Activated CD4-positive, alpha-beta T cell treated with anti-CD3 and anti-CD28 coated beads, Interleukin-2, amount 10 ng/mL, durations not matched to agents 24 days and 14 days (primary cell): ENCODE measurements at regions of chr15 and their contacts with region 1.

Region 1: GRCh38 chr15:81274931-81275707 is 48.8 kb downstream of the STARD5 start:
- DNase-seq: peak; percentile 94
- H3K4me3 Mint-ChIP-seq: peak overlapping the region; percentile 15
- H3K27ac Mint-ChIP-seq: peak overlapping the region; percentile 48
- H3K4me1 Mint-ChIP-seq: peaks cover 29% of the 10 kb centered on the region
- H3K27me3 Mint-ChIP-seq: no peaks in the 10 kb centered on the region

Region 2: DNA sequence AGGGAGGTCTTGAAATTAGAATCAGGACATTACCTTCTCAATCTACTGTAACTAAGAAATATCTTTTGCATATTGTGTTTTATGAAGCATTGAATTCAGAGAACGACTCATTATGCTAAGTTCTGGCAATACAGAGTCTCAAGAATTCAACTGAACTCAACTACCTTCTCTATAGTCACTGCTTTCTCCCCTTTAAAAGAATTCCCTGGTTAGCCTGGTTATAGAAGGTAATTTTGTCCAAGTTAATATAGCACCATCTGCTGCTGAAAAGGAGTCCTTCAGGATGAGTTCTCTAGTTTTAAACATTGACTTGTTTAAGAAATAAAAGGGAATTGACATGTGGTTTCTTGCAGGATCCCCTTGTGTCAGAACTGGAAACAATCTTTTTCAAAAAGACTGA is 18.2 kb before region 1 on chr15:
- intact Hi-C with region 1: no loop called
- DNase-seq: no peak
- H3K4me3 Mint-ChIP-seq: no peak overlapping the region
- H3K27ac Mint-ChIP-seq: no peak overlapping the region
- H3K4me1 Mint-ChIP-seq: peaks cover 2% of the 10 kb centered on the region
- H3K27me3 Mint-ChIP-seq: peaks cover 21% of the 10 kb centered on the region

Region 3: DNA sequence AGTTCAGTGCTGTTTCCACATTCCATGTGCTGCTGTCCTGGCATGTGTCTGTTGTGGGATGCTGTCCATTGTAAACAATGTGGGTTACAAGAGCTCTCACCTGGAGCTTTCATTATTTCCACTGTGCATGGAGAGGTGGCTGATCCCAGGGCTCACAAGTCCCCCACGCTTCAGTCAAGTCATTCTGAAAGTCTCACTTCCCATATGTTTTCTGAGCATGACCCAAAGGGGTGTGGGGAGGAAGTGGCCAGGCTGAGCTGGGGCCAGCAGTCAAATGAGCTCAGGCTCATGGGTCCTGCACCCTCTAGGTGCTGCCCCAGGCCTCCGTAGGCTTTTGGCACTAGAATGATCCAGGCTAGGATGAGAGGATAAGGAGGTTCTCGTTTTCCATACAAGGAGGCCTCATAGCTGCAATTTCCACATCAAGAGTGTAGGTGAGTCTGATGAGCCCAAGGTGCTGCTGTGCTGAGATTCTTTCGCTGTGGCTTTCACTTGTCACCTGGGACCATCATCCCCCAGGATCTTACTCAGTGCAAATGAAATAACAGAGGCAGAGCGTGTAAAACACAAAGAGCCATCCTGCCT is 26.8 kb after region 1 on chr15:
- intact Hi-C with region 1: loop called (anchors 1 kb)
- DNase-seq: peak; percentile 84
- H3K4me3 Mint-ChIP-seq: peak overlapping the region; percentile 94
- H3K27ac Mint-ChIP-seq: peak overlapping the region; percentile 89
- H3K4me1 Mint-ChIP-seq: peaks cover 77% of the 10 kb centered on the region
- H3K27me3 Mint-ChIP-seq: no peaks in the 10 kb centered on the region

Region 4: GRCh38 chr15:81323944-81324881 is 49.1 kb after region 1 on chr15 and contains the start of gene STARD5:
- intact Hi-C with region 1: loop called (anchors 1 kb)
- DNase-seq: peak; percentile 100
- H3K4me3 Mint-ChIP-seq: peak within 1 kb of the TSS; percentile 91
- H3K27ac Mint-ChIP-seq: peak within 1 kb of the TSS; percentile 73
- H3K4me1 Mint-ChIP-seq: peaks cover 23% of the 10 kb centered on the region
- H3K27me3 Mint-ChIP-seq: no peaks in the 10 kb centered on the region
- total RNA-seq, gene STARD5: 4.6 and 5.8 TPM in 2 replicates

Region 5: DNA sequence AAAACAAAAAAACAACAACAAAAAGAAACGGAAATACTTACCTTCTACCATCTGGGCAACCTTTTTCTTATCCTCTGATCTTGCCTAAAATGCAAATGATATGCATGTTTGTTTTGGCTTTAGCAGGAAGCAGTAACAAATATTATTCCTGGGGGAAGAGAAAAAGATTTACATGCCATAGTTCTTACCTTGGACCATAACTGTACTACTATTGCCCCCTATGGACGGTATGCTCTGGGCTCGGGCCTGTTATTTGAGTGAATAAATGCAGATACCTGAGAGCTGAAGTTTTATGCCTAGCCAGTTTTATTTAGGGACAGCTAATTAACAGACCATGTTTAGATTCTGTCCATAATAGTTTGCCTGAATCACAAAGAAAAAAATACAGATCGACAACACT is 61.4 kb after region 1 on chr15:
- intact Hi-C with region 1: loop called (anchors 1 kb)
- DNase-seq: peak; percentile 75
- H3K4me3 Mint-ChIP-seq: no peak overlapping the region
- H3K27ac Mint-ChIP-seq: no peak overlapping the region
- H3K4me1 Mint-ChIP-seq: peaks cover 3% of the 10 kb centered on the region
- H3K27me3 Mint-ChIP-seq: peaks cover 8% of the 10 kb centered on the region

Region 6: GRCh38 chr15:81400640-81401236 is 125.6 kb after region 1 on chr15:
- intact Hi-C with region 1: loop called (anchors 1 kb)
- DNase-seq: peak; percentile 77
- H3K4me3 Mint-ChIP-seq: no peak overlapping the region
- H3K27ac Mint-ChIP-seq: no peak overlapping the region
- H3K4me1 Mint-ChIP-seq: peaks cover 2% of the 10 kb centered on the region
- H3K27me3 Mint-ChIP-seq: peaks cover 16% of the 10 kb centered on the region

Region 7: DNA sequence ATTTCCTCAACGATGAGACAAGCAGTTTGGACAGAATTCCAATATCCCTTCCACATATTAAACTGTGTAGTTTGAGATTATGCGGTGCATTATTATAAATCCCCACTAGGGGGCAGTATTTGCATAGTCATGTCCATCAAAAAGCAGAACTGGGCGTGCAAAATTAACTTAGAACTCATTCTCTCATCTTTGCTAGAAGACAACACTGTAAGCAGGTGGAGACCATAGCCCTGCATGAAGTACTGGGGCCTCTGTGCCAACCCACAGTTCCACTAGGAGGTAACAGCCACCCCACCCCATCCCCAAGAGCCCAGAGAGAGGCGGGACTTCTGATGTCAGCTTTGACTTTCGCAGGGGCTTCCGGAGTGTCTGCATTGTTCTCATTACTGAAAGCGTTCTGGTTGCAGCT is 205.5 kb after region 1 on chr15:
- intact Hi-C with region 1: loop called (anchors 10 kb)
- DNase-seq: peak; percentile 81
- H3K4me3 Mint-ChIP-seq: no peak overlapping the region
- H3K27ac Mint-ChIP-seq: no peak overlapping the region
- H3K4me1 Mint-ChIP-seq: no peaks in the 10 kb centered on the region
- H3K27me3 Mint-ChIP-seq: peaks cover 5% of the 10 kb centered on the region